ENCODE measurements at regions of chr16 and their contacts with region 1.

Region 1: DNA sequence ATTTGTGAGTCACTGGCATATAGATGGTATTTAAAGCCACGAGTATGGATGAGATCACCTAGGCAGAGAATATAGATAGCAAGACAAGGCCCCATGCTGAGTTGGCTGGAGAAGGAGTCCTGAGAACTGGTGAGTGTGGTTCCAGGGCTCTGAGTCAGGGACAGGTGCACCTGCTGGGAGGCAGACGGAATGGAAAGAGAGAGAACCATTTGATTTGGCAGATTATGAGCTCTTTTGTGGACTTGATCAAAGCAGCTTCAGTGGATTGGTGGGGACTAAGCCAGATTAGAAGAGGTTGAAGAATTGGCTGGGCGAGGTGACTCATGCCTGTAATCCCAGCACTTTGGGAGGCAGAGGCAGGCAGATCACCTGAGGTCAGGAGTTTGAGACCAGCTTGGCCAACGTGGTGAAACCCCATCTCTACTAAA is 4.3 kb upstream of the C16orf92 start:
- DNase-seq: no peak
- H3K4me3 ChIP-seq: no peak overlapping the region
- H3K27ac ChIP-seq: no peak overlapping the region
- H3K4me1 ChIP-seq: no peaks in the 10 kb centered on the region
- H3K27me3 ChIP-seq: no peaks in the 10 kb centered on the region
- CTCF ChIP-seq: no peak

Region 2: DNA sequence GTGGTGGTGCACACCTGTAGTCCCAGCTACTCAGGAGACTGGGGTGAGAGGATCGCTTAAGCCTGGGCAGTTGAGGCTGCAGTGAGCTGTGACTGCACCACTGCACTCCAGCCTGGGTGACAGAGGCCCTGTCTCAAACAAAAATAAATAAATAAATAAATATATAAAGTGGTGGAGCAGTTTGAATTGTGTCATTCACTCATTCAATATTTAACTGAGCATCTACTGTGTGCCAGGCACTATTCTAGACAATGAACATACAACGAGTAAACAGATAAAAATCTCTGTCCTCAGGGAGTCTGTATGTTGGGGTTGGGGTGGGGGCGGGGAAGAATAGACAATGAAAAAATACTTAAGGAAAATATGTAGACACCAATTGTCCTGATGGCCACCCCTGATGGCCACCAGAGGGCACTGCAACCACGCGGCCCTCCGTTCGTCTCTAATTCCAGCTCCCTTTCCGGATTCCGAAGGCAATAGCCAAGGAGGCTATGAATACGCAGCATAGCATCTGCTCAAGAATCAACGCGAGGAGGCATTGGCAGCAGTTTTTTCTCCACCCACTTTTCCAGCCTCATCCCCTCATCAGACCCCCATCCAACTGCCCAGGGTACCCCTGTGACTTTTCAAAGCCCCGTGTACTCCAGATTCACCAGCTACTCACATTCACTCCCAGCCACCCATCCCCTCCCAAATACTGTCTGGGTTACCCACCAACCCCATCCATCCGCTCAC is 318.3 kb before region 1 on chr16:
- intact Hi-C with region 1: loop called (anchors 1 kb)
- DNase-seq: peak; percentile 31 to 86
- H3K4me3 ChIP-seq: no peak overlapping the region
- H3K27ac ChIP-seq: no peak overlapping the region
- H3K4me1 ChIP-seq: peaks cover 0 to 3% of the 10 kb centered on the region in 2 donors
- H3K27me3 ChIP-seq: no peaks in the 10 kb centered on the region
- CTCF ChIP-seq: peak; percentile 81 to 87 (median 83)

Region 3: DNA sequence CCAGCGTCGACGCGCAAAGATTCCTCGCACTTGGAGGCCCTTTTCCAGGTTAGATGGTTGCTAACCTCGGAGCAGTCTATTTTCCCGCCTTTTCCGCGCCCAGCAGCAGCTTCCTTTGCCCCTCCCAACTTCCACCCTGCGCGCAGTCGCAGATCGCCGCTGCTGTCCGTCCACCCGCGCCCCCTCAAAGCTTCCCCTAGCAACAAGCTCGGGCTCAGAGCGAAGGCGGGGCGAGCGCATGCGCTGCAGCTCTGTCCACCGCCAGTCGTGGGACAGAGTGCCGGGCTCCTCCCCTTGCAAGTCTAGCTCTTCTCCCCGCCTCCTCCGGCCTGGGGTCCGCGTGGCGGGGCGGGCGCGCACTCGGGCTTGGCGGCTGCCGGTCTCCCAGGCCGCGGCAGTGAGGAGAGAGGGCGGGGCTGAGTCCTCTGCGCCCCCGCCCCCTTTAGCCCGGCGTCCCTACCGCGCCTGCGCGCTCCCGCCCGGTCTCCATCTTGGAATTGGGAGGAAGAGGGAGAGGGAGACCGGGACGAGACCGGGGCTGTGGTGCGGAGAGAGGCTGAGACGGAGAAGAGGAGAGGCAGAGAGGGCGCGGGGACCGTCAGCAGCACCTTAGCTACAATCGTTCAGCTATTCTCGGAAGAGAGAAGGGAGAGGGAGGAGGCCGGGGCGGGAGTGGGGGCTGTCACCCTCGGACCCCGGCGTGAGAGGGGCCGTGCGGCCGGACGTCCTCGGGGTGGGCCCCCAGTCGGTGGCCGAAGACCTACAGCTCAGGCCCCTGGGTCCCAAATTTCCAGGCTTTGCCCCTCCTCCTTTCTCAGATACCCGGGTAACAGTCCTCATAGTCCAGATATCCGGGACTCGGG is 45.1 kb before region 1 on chr16 and contains the start of gene TAOK2:
- intact Hi-C with region 1: no loop called
- DNase-seq: peak; percentile 94 to 99
- H3K4me3 ChIP-seq: peak within 1 kb of the TSS; percentile 80 to 93
- H3K27ac ChIP-seq: peak within 1 kb of the TSS; percentile 85 to 90
- H3K4me1 ChIP-seq: peaks cover 12 to 24% of the 10 kb centered on the region in 2 donors
- H3K27me3 ChIP-seq: no peaks in the 10 kb centered on the region
- CTCF ChIP-seq: no peak
- total RNA-seq, gene TAOK2: 101 TPM